ENCODE measurements at regions of chr19 and their contacts with region 1.

Region 1: GRCh38 chr19:49801966-49802690 is 11.0 kb downstream of the FUZ start:
- DNase-seq: peak; percentile 91 to 93
- ATAC-seq: peak; percentile 60 to 92 (median 88)
- H3K4me3 ChIP-seq: peak overlapping the region in 9 of 10 donors; percentile 12 to 53 (median 41)
- H3K27ac ChIP-seq: peak overlapping the region in 9 of 10 donors; percentile 10 to 67 (median 57)
- H3K4me1 ChIP-seq: peaks cover 0 to 18% (median 5%) of the 10 kb centered on the region in 9 donors
- H3K27me3 ChIP-seq: no peaks in the 10 kb centered on the region
- CTCF ChIP-seq: peak in 6 of 9 donors; percentile 6 to 46 (median 33)

Region 2: DNA sequence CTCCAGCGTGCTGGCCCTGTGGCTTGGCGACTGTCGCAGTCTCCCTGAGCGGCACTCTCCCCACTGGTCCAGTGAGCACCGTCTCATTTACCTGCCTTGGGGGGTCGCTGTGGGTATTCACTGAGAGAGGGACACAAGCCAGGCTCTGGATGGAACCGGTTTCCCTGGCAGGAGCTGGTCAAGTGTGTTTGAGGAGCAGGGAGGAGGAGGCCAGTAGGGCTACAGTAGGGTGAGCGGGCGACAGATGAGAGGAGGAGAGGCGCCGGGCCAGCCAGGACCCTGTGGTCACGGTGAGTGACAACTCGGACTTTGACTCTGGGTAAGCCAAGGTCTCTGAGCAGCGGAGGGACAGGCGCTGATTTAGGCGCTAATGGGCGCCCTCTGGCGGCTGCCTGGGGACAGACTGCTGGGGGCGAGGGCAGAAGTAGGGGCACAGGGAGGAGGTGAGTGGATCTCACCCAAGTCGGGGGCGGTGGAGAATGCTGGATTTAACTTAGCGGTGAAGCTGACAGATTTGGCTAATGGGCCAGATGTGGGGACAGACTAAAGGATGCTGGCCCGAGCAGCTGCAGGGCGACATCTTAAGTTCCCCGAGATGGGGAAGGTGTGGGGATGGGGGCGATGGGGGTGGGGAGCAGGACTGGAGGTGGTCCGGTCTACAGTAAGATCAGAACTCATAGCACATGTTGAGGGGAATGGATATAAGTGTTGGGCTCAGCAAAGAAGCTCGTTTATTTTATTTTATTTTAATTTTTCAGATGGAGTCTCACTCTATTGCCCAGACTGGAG is 129.8 kb before region 1 on chr19:
- intact Hi-C with region 1: no loop called
- DNase-seq: peak; percentile 76 to 83
- ATAC-seq: peak in 1 of 8 donors; percentile 8
- H3K4me3 ChIP-seq: peak overlapping the region in 5 of 10 donors; percentile 27 to 38 (median 28)
- H3K27ac ChIP-seq: peak overlapping the region in 8 of 10 donors; percentile 42 to 76 (median 60)
- H3K4me1 ChIP-seq: peaks cover 0 to 18% (median 12%) of the 10 kb centered on the region in 9 donors
- H3K27me3 ChIP-seq: no peaks in the 10 kb centered on the region
- CTCF ChIP-seq: peak; percentile 80 to 94 (median 90)

Region 3: DNA sequence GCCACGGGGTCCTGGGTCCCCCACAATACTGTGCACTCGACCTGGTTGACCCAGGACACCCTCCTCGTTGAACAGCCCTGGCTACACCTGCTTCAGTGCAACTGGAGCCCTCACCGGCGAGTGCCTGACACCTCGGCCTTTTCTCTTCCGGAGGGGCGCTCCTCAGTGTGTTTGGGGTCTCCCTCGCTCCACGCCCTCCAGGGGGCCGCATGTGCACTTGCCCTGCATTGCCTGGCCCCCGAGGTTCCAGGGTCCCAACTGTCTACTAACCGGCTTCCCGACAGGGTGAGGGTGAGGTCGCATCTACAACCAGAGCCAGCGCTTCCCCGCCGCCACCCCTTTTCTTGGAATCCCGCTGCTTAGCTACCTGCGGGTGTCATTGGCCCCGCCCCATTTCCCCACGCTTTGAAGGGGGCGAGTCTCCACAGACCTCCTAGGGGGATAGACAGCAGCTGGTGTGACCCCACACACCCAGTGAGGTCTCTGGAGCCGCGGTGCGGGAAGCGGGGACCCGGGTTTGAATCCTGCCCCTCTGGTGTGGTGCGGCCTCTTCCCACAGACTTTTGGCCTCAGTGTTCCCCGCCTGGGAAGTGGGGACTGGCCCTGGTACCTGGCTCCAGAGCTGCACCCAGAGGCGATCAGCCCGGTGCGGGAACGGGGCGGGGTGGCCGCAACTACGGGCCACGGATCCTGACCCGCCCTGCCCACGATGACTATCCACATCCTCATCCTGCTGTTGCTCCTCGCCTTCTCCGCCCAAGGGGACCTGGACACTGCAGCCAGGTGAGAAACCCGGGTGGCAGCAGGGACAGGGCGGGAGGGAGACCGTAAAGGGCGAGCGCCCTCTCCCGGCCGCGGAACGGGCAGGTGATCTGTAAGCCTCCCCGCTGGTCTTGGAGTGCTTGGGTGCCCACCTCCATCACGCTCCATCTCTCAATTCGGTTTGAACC is 112.7 kb before region 1 on chr19 and contains the start of gene ADM5:
- intact Hi-C with region 1: loop called in 2 of 10 experiments (anchors 5 to 10 kb)
- DNase-seq: peak in 1 of 2 donors; percentile 54
- ATAC-seq: peak; percentile 26 to 63 (median 52)
- H3K4me3 ChIP-seq: peak within 1 kb of the TSS; percentile 32 to 66 (median 56)
- H3K27ac ChIP-seq: peak within 1 kb of the TSS; percentile 64 to 84 (median 77)
- H3K4me1 ChIP-seq: peaks cover 6 to 72% (median 48%) of the 10 kb centered on the region in 9 donors
- H3K27me3 ChIP-seq: peaks cover 0 to 40% (median 9%) of the 10 kb centered on the region in 7 donors
- CTCF ChIP-seq: peak; percentile 18 to 76 (median 56)
- total RNA-seq, gene ADM5: 0.16 to 0.74 (median 0.47) TPM

Region 4: DNA sequence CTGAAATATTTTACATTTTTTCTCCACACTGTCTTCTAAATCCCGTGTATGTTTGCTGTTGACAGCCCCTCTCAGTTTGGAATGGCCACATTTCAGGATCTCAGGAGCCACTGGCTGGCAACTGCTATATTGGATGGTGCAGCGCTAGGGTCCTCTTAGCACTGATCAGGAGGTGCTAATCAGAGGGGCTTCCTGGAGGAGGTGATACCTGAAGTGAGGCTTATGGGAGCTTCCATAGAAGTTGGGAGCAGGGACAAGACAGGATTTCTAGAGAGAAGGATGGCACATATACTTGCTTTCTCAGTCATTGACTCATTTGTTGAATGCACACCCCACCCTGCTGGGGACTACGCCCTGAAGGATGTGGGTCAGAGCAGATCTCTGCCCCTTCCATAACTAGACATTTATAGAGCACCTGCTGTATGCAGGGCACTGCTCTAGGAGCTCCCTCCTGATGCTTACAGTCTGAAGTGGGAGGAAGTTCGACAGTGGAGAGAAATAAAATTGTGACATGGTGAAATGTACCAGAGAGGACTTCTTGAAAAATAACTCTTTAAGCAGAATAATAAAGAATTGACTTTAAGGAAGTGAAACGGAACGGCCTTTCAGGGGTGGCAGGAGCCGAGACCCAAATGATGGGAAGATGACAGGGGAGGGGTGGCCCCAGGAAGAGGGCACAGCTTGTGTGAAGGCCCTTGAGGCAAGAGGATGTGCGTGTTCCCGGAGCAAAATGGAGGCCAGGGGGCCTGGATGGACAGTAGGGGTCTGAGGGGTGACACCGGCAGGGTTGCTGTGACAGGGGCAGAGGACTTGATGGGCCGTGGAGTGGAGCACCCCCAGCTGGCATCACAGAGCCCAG is 22.2 kb before region 1 on chr19:
- intact Hi-C with region 1: no loop called
- DNase-seq: no peak
- ATAC-seq: peak in 3 of 8 donors; percentile 14 to 38 (median 20)
- H3K4me3 ChIP-seq: no peak overlapping the region
- H3K27ac ChIP-seq: peak overlapping the region in 1 of 10 donors; percentile 60
- H3K4me1 ChIP-seq: peaks cover 0 to 26% (median 0%) of the 10 kb centered on the region in 9 donors
- H3K27me3 ChIP-seq: no peaks in the 10 kb centered on the region
- CTCF ChIP-seq: no peak

Region 5: GRCh38 chr19:49817964-49818648 is 16.0 kb after region 1 on chr19 and contains the start of gene MED25:
- intact Hi-C with region 1: no loop called
- DNase-seq: peak; percentile 85 to 87
- ATAC-seq: peak; percentile 75 to 83 (median 78)
- H3K4me3 ChIP-seq: peak within 1 kb of the TSS; percentile 49 to 93 (median 86)
- H3K27ac ChIP-seq: peak within 1 kb of the TSS; percentile 83 to 98 (median 96)
- H3K4me1 ChIP-seq: peaks cover 5 to 44% (median 38%) of the 10 kb centered on the region in 9 donors
- H3K27me3 ChIP-seq: no peaks in the 10 kb centered on the region
- CTCF ChIP-seq: peak in 6 of 9 donors; percentile 27 to 59 (median 36)
- total RNA-seq, gene MED25: 39.7 to 110 (median 54.9) TPM

Region 6: GRCh38 chr19:49850473-49851342 is 48.6 kb after region 1 on chr19 and contains the start of gene PTOV1:
- intact Hi-C with region 1: no loop called
- DNase-seq: peak; percentile 92 to 93
- ATAC-seq: peak; percentile 94 to 98 (median 96)
- H3K4me3 ChIP-seq: peak within 1 kb of the TSS; percentile 71 to 100 (median 86)
- H3K27ac ChIP-seq: peak within 1 kb of the TSS; percentile 96 to 100 (median 99)
- H3K4me1 ChIP-seq: peaks cover 9 to 49% (median 29%) of the 10 kb centered on the region in 9 donors
- H3K27me3 ChIP-seq: no peaks in the 10 kb centered on the region
- CTCF ChIP-seq: no peak
- total RNA-seq, gene PTOV1: 67.8 to 137 (median 90.0) TPM